ENCODE measurements at regions of chr16 and their contacts with region 1.

Region 1: GRCh38 chr16:30429678-30430427 is at the start of gene DCTPP1:
- DNase-seq: peak; percentile 97
- H3K4me3 Mint-ChIP-seq: no peak within 1 kb of the TSS
- H3K27ac Mint-ChIP-seq: no peak within 1 kb of the TSS
- H3K4me1 Mint-ChIP-seq: peaks cover 39% of the 10 kb centered on the region
- H3K27me3 Mint-ChIP-seq: no peaks in the 10 kb centered on the region
- total RNA-seq, gene DCTPP1: 51.3 to 51.4 TPM

Region 2: DNA sequence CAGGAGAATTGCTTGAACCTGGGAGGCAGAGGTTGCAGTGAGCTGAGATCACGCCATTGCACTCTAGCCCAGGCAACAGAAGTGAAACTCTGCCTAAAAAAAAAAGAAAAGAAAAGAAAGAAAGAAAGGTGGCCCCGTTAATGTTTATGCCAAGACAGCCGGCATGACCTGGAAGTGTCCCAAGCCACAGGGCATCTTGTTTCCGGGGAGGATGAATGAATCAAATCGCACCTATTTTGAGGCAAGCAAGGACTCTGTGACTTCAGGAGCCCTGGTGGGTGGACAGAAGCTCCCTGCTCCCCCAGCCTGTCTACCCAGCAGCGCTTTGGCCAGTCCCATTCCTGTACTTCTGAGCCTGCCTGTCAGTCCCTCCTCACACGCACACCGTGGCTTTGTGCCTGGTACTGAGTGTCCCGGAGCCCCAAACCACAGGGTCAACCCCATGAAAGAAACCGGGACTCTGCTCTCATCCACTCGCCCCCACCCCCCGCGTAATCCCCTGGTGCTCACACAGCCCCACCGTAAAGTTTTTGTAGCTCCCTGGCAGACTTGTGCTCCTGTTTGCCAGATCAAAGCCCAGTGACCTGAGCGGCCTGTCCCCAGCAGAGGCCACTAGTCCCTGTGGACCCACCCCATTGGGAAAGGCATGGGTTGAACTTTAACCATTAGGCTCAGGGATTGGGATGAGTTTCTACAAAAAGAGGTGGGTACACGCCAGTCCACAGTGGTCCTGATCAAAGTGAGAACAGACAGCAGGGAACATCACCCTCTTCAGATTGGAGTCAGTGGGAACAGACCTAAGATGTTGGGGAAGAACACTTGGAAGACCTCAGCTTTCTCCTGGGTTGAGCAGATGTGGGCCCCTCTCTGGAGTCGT is 94.0 kb before region 1 on chr16:
- CTCF ChIA-PET with region 1: no interaction called
- POLR2A ChIA-PET with region 1: no interaction called
- DNase-seq: peak; percentile 39
- H3K4me3 Mint-ChIP-seq: peak overlapping the region; percentile 89
- H3K27ac Mint-ChIP-seq: peak overlapping the region; percentile 63
- H3K4me1 Mint-ChIP-seq: peaks cover 20% of the 10 kb centered on the region
- H3K27me3 Mint-ChIP-seq: no peaks in the 10 kb centered on the region

Region 3: GRCh38 chr16:30407102-30407803 is 22.6 kb before region 1 on chr16 and contains the start of gene ZNF771:
- CTCF ChIA-PET with region 1: interaction called, 16 read pairs
- POLR2A ChIA-PET with region 1: interaction called, 6 read pairs
- DNase-seq: peak; percentile 92
- H3K4me3 Mint-ChIP-seq: peak within 1 kb of the TSS; percentile 89
- H3K27ac Mint-ChIP-seq: peak within 1 kb of the TSS; percentile 79
- H3K4me1 Mint-ChIP-seq: peaks cover 37% of the 10 kb centered on the region
- H3K27me3 Mint-ChIP-seq: peaks cover 3% of the 10 kb centered on the region
- total RNA-seq, gene ZNF771: 4.2 to 4.5 TPM

Region 4: GRCh38 chr16:30458561-30459394 is 28.9 kb after region 1 on chr16:
- CTCF ChIA-PET with region 1: interaction called, 16 read pairs
- POLR2A ChIA-PET with region 1: interaction called, 9 read pairs
- DNase-seq: peak; percentile 95
- H3K4me3 Mint-ChIP-seq: peak overlapping the region; percentile 67
- H3K27ac Mint-ChIP-seq: peak overlapping the region; percentile 98
- H3K4me1 Mint-ChIP-seq: peaks cover 74% of the 10 kb centered on the region
- H3K27me3 Mint-ChIP-seq: peaks cover 2% of the 10 kb centered on the region

Region 5: DNA sequence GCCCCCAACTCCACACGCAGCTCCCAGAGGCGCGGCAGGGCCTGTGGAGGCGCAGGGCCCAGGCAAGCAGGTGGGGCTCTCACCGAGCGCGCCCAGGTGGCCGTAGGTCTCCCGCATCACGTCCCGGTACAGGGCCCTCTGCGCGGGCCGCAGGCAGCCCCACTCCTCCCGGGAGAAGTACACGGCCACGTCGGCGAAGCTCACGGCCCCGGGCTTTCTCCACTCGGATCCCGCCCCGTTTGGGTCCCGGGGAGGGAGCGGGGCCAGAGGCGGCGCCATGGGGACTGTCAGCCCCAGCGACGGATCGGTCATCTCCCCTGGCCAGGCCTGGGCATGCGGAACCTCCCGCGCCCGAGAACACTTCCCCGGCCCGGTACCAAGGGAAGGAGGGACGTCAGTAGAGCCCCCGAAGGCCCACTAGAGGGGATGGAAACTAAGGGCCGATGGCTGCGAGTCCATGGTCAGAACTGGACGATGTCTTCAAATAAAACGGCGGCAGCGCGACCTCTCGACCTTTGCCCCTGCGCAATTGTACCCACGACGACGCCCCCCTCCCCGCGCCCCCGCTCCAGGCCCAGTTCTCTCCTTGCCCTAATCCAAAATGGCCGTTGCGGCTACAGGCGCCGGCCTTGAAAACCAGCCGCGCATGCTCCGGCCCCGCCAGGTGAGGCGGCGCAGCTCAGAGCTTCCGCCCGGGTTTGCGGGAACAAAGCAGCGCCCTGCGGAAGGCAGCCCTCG is 104.7 kb after region 1 on chr16 and contains the start of gene ZNF747:
- CTCF ChIA-PET with region 1: interaction called, 30 read pairs
- POLR2A ChIA-PET with region 1: interaction called, 25 read pairs
- DNase-seq: peak; percentile 93
- H3K4me3 Mint-ChIP-seq: peak within 1 kb of the TSS; percentile 87
- H3K27ac Mint-ChIP-seq: peak within 1 kb of the TSS; percentile 97
- H3K4me1 Mint-ChIP-seq: peaks cover 45% of the 10 kb centered on the region
- H3K27me3 Mint-ChIP-seq: no peaks in the 10 kb centered on the region
- total RNA-seq, gene ZNF747: 10.6 to 10.7 TPM

Region 6: GRCh38 chr16:30571695-30572600 is 142.1 kb after region 1 on chr16 and contains the start of gene ZNF688:
- CTCF ChIA-PET with region 1: interaction called, 9 read pairs
- POLR2A ChIA-PET with region 1: interaction called, 12 read pairs
- DNase-seq: peak; percentile 96
- H3K4me3 Mint-ChIP-seq: peak within 1 kb of the TSS; percentile 82
- H3K27ac Mint-ChIP-seq: peak within 1 kb of the TSS; percentile 90
- H3K4me1 Mint-ChIP-seq: peaks cover 55% of the 10 kb centered on the region
- H3K27me3 Mint-ChIP-seq: no peaks in the 10 kb centered on the region
- total RNA-seq, gene ZNF688: 19.2 to 22.8 TPM

Region 7: GRCh38 chr16:30615358-30616091 is 185.7 kb after region 1 on chr16:
- CTCF ChIA-PET with region 1: interaction called, 20 read pairs
- POLR2A ChIA-PET with region 1: interaction called, 6 read pairs
- DNase-seq: peak; percentile 85
- H3K4me3 Mint-ChIP-seq: no peak overlapping the region
- H3K27ac Mint-ChIP-seq: no peak overlapping the region
- H3K4me1 Mint-ChIP-seq: peaks cover 12% of the 10 kb centered on the region
- H3K27me3 Mint-ChIP-seq: peaks cover 17% of the 10 kb centered on the region

Region 8: DNA sequence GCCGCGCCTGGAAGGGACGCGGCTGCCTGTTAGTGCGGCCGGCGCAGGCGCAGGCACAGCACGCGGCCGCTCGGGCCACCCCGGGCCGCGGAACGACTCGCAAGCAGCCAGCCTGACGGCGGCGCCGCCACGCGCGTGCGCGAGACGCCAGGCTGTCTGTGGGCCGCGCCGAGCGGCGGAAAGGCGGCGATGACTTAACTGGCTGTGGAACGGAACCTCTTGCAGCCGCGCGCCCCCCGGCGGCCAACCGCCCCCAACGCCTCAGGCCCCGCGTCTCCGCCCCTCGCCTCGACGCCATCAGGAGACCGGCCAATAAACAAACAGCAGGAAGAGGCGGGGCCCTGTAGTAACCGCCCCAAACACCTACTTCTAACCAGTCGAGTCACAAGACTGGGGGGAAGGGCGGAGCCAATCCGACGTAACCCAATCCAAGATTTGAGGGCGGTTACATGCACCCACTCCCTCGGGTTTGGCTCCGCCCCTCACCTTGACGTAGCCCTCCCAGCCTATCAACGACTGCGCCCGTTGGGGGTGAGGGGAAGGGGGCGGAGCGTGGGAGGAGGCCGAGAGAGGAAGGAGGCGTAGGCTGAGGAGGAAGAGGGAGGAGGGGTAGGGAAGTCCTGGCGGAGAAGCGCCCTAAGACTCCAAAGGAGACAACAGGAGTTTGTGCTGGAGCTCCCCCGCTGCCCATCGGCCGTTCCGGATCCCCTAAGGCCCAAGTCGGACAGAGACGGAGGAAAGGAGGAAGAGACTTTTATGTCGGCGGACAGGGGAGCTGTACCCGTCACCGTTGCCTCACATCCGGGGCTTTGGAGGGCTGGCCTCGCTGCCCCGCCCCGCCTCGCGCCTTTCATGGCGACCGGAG is 228.2 kb after region 1 on chr16 and contains the start of gene FBRS:
- CTCF ChIA-PET with region 1: interaction called, 10 read pairs
- POLR2A ChIA-PET with region 1: interaction called, 4 read pairs
- DNase-seq: peak; percentile 100
- H3K4me3 Mint-ChIP-seq: peak within 1 kb of the TSS; percentile 86
- H3K27ac Mint-ChIP-seq: peak within 1 kb of the TSS; percentile 98
- H3K4me1 Mint-ChIP-seq: peaks cover 47% of the 10 kb centered on the region
- H3K27me3 Mint-ChIP-seq: no peaks in the 10 kb centered on the region
- total RNA-seq, gene FBRS: 106 to 107 TPM